ENCODE measurements at regions of chr16 and their contacts with region 1.

Region 1: DNA sequence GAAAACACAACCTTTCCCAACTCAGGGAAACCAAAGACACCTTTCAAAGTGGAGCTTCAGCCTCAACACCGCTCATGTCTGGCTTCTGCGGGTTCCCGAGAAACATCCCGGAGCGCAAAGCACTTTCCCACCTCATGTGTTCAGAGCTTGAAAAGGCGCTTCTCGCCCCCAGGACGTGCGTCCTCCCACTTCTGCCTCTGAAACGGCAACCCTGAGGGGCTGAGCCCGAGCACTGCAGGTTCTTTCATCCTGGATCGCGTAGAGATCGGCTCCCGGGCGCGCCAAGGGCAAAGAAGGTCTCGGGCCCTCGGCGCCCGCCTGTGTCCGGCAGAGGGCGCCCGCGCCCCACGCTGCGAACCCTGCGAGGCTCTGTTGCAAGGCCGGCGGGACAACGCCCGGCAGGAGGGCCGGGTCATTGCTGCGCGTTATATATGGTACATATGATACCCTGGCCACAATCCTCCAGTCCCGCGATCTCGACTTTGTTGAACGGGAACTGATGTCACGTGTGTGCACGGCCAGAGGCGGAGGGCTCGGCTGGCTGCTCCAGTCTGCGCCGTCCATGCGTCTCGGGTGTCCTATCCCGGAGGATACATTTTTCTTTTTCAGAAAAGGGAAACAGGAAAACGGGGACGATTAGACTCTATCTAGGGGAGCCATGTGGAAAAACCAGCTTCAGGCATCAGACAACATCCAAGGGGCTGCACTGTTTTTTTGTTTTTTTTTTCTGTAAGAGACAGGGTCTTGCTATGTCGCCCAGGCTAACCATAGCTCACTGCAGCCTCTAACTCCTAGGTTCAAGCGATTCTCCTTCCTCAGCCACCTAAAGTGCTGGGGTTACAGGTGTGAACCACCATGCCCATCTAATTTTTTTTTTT is 19.1 kb downstream of the COQ7 start:
- DNase-seq: peak; percentile 79
- ATAC-seq: peak; percentile 99
- H3K4me3 Mint-ChIP-seq: peak overlapping the region; percentile 38
- H3K27ac Mint-ChIP-seq: no peak overlapping the region
- H3K4me1 Mint-ChIP-seq: peaks cover 3% of the 10 kb centered on the region
- H3K27me3 Mint-ChIP-seq: peaks cover 14% of the 10 kb centered on the region

Region 2: DNA sequence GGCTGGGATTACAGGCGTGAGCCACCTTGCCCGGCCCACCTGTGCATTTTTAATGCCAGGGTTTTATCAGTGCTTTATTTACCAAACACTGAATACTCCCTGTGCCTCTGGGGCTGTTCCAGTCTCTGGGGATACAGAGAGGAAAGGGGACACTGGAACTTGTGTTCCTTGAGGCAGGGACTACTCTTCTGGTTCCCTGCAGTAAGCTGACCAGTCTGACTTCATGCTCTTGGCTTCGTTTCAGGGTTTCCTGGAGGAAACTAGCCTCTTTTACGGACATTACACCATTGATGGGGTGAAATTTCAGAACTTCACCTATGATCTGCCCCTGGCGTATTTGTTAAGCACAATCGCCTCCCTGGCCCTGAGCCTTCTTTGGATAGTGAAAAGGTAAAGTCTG is 56.6 kb before region 1 on chr16:
- CTCF ChIA-PET with region 1: no interaction called
- DNase-seq: no peak
- ATAC-seq: no peak
- H3K4me3 Mint-ChIP-seq: no peak overlapping the region
- H3K27ac Mint-ChIP-seq: no peak overlapping the region
- H3K4me1 Mint-ChIP-seq: no peaks in the 10 kb centered on the region
- H3K27me3 Mint-ChIP-seq: peaks cover 2% of the 10 kb centered on the region

Region 3: GRCh38 chr16:19075511-19075910 is 11.1 kb before region 1 on chr16:
- CTCF ChIA-PET with region 1: interaction called, 13 read pairs
- DNase-seq: no peak
- ATAC-seq: no peak
- H3K4me3 Mint-ChIP-seq: no peak overlapping the region
- H3K27ac Mint-ChIP-seq: no peak overlapping the region
- H3K4me1 Mint-ChIP-seq: no peaks in the 10 kb centered on the region
- H3K27me3 Mint-ChIP-seq: no peaks in the 10 kb centered on the region

Region 4: DNA sequence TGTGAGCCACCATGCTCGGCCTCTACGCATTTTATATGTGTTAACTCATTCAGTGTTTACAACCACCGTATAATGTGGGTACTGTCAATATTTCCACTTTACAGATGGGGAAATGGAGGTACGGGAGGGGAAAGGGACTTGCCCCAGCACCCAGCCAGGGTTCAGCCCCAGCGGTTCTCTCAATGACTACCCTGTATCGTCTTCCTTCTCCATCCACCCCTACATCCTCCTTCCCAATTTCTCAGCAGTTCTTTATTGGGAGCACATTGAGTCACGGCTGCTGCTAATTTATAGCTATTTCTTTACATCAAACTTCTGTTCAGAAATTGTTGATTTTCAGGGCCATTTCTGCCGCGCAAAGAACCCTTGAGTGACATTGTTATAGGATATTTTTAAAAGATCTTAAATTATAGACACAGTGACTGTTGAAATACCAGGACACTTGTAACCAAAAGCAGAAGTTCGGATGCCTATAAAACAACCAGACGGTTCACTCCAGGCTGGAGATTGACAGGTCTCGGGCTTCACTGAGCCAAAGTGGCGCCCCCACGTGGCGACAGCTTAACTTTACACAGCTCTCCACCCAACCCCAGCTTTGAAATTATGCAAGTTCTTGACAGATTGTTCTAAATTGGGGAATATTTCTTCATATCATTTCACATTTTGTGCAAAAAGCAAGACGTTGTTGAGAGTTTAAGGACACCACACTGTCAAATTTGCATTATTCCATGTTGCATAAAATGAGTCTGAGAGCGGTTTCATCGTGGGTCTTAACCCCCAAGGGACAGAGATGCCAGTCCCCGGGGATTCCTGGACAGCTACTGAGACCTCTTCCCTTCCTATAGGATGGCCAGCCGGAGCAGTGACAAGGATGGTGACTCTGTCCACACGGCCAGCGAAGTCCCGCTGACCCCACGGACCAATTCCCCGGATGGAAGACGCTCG is 93.3 kb after region 1 on chr16:
- CTCF ChIA-PET with region 1: interaction called, 80 read pairs
- DNase-seq: peak; percentile 55
- ATAC-seq: peak; percentile 47
- H3K4me3 Mint-ChIP-seq: no peak overlapping the region
- H3K27ac Mint-ChIP-seq: no peak overlapping the region
- H3K4me1 Mint-ChIP-seq: no peaks in the 10 kb centered on the region
- H3K27me3 Mint-ChIP-seq: peaks cover 7% of the 10 kb centered on the region

Region 5: DNA sequence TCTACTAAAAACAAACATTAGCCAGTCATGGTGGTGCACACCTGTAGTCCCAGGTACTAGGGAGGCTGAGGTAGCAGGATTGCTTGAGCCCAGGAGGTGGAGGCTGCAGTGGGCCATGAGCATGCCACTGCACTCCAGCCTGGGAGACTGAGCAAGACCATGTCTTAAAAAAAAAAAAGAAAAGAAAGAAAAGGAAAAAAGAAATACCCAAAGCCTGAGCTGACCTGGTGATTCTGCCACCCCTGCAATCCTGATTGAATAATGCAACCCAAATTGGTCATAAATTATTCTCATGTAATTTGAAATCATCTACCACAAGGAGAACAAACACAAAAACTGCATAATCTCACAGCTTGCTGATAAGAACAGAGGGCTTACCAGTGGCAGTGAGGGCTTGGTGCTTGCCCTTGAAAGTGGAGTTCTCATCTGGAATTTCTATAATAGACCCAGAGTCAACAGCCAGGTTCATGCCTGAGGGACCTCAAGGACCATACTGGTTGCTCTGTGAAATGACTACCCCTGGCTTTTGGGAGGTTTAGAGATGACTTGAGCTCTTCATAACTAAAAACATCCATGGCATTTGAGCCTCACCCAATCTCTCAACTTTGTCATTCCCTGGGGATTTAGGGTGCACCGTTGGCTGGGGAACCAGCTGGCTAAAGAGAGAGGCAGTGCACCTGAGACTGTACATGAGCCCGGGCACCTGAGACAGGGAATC is 295.7 kb after region 1 on chr16:
- CTCF ChIA-PET with region 1: interaction called, 14 read pairs
- DNase-seq: no peak
- ATAC-seq: no peak
- H3K4me3 Mint-ChIP-seq: no peak overlapping the region
- H3K27ac Mint-ChIP-seq: no peak overlapping the region
- H3K4me1 Mint-ChIP-seq: peaks cover 36% of the 10 kb centered on the region
- H3K27me3 Mint-ChIP-seq: peaks cover 39% of the 10 kb centered on the region

Region 6: DNA sequence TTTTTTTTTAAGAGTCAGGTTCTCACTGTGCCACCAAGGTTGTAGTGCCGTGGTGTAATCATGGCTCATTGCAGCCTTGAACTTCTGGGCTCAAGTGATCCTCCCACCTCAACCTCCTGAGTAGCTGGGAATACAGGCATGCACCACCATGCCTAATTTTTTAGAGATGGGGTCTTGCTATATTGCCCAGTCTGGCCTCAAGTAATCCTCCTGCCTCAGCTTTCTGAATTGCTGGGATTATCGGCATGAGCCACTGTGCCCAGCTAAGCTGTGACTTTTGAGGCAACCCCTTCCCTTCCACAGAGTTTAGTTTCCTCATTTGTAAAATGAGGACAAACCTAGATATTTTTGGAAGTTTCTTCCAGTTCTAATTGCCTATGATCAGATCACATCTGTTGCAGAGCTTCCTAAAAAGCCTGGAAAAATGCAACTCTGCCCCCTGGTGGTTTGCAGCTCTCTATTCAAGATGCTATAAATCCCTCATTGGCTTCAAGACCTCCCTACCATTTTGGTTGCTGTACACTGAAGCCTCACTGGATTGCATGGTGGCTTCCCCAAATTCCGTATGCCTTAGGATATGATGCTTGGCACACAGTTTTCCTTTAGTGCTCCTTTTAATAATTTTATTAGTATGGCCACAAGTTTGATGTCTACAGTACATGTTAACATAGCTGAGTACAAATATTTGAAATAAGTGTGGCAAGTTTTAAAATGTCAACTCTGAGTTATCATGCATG is 416.0 kb after region 1 on chr16:
- CTCF ChIA-PET with region 1: interaction called, 27 read pairs
- DNase-seq: peak; percentile 76
- ATAC-seq: peak; percentile 78
- H3K4me3 Mint-ChIP-seq: no peak overlapping the region
- H3K27ac Mint-ChIP-seq: no peak overlapping the region
- H3K4me1 Mint-ChIP-seq: peaks cover 11% of the 10 kb centered on the region
- H3K27me3 Mint-ChIP-seq: no peaks in the 10 kb centered on the region